Activated CD4-positive, alpha-beta T cell treated with anti-CD3 and anti-CD28 coated beads for 36 hours (primary cell): ENCODE measurements at regions of chr5 and their contacts with region 1.

Region 1: DNA sequence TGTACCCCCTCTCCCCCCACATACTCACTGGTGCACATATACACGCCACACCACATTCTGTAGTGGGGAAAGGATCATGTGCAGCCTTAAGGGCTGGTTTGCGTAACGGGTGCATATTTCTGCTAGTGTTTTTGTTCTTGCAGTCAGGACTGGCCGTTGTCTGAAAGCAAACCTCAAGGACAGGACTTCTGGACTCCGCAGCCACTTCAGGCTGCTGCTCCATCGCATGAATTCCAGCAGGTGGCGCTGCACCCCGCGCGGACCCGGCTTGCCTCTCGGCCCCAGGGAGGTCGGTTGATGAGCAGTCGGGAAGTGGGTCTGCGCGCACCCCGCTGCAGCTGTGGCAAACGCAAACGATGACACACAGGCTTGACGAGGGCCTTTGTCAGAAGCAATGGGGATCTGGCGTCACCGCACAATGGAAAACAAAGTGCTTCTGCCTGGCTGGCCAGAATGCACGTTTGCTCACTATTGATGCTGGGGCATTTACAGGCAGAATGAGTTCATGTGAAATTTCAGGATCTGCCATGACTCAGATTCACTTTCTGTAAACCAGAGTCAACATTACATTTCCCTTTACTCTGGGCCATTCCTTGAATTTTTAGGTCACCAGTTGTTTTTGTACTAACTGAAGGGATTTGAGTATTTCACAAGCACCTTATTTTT is 36.3 kb upstream of the GLRX start:
- DNase-seq: peak; percentile 98
- ATAC-seq: peak; percentile 95
- H3K4me3 Mint-ChIP-seq: peak overlapping the region; percentile 12
- H3K27ac Mint-ChIP-seq: peak overlapping the region; percentile 86
- H3K4me1 Mint-ChIP-seq: peaks cover 58% of the 10 kb centered on the region
- H3K27me3 Mint-ChIP-seq: no peaks in the 10 kb centered on the region

Region 2: DNA sequence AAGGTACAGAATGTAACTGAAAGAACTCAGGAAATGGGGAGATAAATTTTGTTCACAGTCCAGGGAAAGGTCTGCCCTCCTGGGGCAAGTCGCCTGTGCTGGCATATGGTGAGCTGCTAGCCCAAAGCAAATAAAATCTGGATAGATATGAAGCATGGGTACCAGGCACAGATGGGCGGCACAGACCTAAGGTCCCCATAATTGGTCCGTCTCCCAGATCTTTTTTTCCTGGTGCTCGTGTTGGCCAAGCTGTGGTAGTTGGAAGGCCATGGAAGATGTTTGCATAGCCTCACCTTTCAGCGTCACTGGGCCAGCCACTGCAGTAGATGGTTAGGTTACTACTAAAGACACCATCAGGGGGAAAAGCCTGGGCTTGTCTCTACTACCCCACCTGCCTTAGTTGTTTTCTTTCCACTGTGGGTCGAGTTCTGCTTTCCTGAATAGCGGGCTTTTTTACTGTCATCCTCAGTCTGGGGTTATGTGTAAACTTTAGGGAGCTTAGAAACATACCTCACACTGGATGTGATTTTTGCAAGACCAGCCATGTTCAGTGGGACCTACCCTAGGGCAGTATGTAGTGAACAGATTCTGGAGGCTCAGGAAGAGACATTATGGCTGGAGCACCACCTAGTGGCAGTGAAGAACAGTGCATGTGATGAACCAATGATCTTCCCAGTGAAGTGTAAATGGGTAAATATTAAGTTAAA is 12.1 kb before region 1 on chr5:
- CTCF ChIA-PET with region 1: interaction called, 22 read pairs
- POLR2A ChIA-PET with region 1: no interaction called
- intact Hi-C with region 1: no loop called
- DNase-seq: peak; percentile 79
- ATAC-seq: peak; percentile 54
- H3K4me3 Mint-ChIP-seq: no peak overlapping the region
- H3K27ac Mint-ChIP-seq: no peak overlapping the region
- H3K4me1 Mint-ChIP-seq: peaks cover 11% of the 10 kb centered on the region
- H3K27me3 Mint-ChIP-seq: peaks cover 4% of the 10 kb centered on the region

Region 3: GRCh38 chr5:95961617-95962474 is 103.1 kb after region 1 on chr5 and contains the start of gene ELL2:
- CTCF ChIA-PET with region 1: interaction called, 4 read pairs
- POLR2A ChIA-PET with region 1: no interaction called
- intact Hi-C with region 1: loop called (anchors 1 to 2 kb)
- DNase-seq: peak; percentile 99
- ATAC-seq: peak; percentile 89
- H3K4me3 Mint-ChIP-seq: peak within 1 kb of the TSS; percentile 97
- H3K27ac Mint-ChIP-seq: peak within 1 kb of the TSS; percentile 96
- H3K4me1 Mint-ChIP-seq: peaks cover 51% of the 10 kb centered on the region
- H3K27me3 Mint-ChIP-seq: peaks cover 3% of the 10 kb centered on the region
- total RNA-seq, gene ELL2: 87.6 to 131 TPM

Region 4: DNA sequence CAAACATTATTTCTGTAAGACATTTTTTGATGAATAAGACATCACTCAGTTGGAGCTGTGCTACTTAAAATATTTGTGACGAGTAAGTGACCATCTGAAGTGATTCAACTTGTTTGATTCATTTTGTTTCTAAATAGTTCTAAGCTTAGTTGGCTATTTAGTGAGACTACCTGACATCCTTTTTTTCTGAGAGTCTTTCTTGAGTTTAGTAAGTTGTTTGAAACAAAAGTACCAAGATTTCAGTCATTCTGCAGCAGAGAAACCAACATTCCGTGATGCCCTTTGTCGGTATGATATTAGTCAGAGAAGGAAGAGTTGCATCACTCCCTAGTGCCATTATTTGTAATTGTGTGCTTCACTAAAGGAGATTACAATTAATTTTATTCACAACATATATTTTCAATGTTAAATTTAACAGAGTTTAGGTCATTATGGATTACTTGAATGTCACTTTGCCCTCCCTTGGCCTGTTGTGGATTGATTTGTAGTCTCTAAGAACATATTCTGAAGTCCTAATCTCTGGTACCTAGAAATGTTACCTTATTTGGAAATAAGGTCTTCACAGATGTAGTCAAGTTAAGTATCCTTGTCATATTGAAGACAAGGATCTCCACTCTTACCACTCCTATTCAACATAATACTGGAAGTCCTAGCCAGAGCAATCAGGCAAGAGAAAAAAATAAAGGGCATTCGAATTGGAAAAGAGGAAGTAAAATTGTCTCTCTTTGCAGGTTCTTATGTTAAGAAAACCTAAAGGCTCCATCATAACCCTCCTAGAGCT is 362.0 kb after region 1 on chr5:
- CTCF ChIA-PET with region 1: interaction called, 3 read pairs
- POLR2A ChIA-PET with region 1: no interaction called
- intact Hi-C with region 1: loop called (anchors 2 to 5 kb)
- DNase-seq: peak; percentile 43
- ATAC-seq: peak; percentile 89
- H3K4me3 Mint-ChIP-seq: no peak overlapping the region
- H3K27ac Mint-ChIP-seq: peak overlapping the region; percentile 77
- H3K4me1 Mint-ChIP-seq: peaks cover 19% of the 10 kb centered on the region
- H3K27me3 Mint-ChIP-seq: peaks cover 13% of the 10 kb centered on the region

Region 5: DNA sequence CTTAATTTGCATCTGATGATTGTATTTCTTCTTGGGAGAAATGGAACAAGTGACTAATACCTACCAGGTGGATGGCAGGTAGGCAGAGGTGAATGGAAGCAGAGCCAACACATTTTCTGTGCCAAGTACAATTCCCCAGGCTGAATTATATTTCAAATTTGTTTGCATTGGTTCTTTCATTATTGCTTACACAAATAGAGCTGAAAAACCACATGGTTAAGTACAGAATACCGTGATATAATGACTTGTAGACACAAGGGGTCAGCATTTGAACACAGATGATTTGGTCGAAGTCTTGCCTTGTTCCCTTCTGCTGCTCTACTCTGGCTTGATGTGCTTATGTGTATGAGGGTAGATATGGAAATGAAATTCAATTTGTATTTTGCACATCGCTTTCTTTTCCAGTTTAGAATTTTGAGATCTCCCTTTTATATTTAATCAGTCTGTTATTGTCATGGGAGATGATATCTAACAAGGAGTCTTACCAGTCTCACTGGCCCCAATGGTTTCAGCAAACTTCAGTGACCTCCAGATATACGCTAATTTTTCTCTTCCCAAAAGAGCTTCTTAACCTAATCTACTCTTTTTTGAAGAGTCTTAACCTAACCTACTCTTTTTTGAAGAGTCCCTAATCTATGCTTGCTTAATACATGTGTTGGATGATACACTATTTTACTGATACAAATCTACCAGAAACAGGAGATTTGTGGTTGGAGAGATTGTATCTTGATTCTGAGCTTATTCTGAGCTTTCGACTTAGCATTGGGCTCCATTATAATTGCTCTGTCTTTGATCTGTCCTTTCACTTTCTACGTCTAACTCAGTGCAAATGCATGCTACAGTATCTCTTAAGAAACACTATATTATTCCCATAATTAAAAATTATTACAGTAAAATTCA is 486.1 kb after region 1 on chr5:
- CTCF ChIA-PET with region 1: interaction called, 9 read pairs
- POLR2A ChIA-PET with region 1: no interaction called
- intact Hi-C with region 1: loop called in 1 of 2 experiments (anchors 2 kb)
- DNase-seq: peak; percentile 12
- ATAC-seq: peak; percentile 89
- H3K4me3 Mint-ChIP-seq: peak overlapping the region; percentile 15
- H3K27ac Mint-ChIP-seq: no peak overlapping the region
- H3K4me1 Mint-ChIP-seq: peaks cover 28% of the 10 kb centered on the region
- H3K27me3 Mint-ChIP-seq: peaks cover 10% of the 10 kb centered on the region

Region 6: GRCh38 chr5:96816411-96816939 is 957.7 kb after region 1 on chr5:
- CTCF ChIA-PET with region 1: no interaction called
- POLR2A ChIA-PET with region 1: no interaction called
- intact Hi-C with region 1: loop called in 1 of 2 experiments (anchors 10 kb)
- DNase-seq: peak; percentile 54
- ATAC-seq: peak; percentile 82
- H3K4me3 Mint-ChIP-seq: peak overlapping the region; percentile 71
- H3K27ac Mint-ChIP-seq: peak overlapping the region; percentile 90
- H3K4me1 Mint-ChIP-seq: peaks cover 58% of the 10 kb centered on the region
- H3K27me3 Mint-ChIP-seq: no peaks in the 10 kb centered on the region